H1 (cell line): ENCODE measurements at regions of chr5 and their contacts with region 1.

Region 1: GRCh38 chr5:57137401-57137800 is 36.5 kb upstream of the GPBP1 start:
- DNase-seq: no peak
- H3K4me3 ChIP-seq: no peak overlapping the region
- H3K27ac ChIP-seq: no peak overlapping the region
- H3K4me1 ChIP-seq: no peaks in the 10 kb centered on the region
- H3K27me3 ChIP-seq: no peaks in the 10 kb centered on the region
- CTCF ChIP-seq: no peak
- EP300 ChIP-seq: no peak
- POLR2A ChIP-seq: no peak
- RAD21 ChIP-seq: no peak

Region 2: GRCh38 chr5:56725711-56726411 is 411.5 kb before region 1 on chr5:
- CTCF ChIA-PET with region 1: no interaction called
- POLR2A ChIA-PET with region 1: no interaction called
- DNase-seq: no peak
- H3K4me3 ChIP-seq: no peak overlapping the region
- H3K27ac ChIP-seq: no peak overlapping the region
- H3K4me1 ChIP-seq: no peaks in the 10 kb centered on the region
- H3K27me3 ChIP-seq: peaks cover 0 to 1% (median 0%) of the 10 kb centered on the region in 4 experiments; a peak in 1 of 7 replicates
- CTCF ChIP-seq: no peak
- EP300 ChIP-seq: no peak
- POLR2A ChIP-seq: no peak
- RAD21 ChIP-seq: no peak

Region 3: GRCh38 chr5:56900858-56901578 is 236.4 kb before region 1 on chr5:
- CTCF ChIA-PET with region 1: interaction called, 21 read pairs
- POLR2A ChIA-PET with region 1: no interaction called
- DNase-seq: peak in 1 of 2 experiments; percentile 52
- H3K4me3 ChIP-seq: no peak overlapping the region
- H3K27ac ChIP-seq: no peak overlapping the region
- H3K4me1 ChIP-seq: no peaks in the 10 kb centered on the region
- H3K27me3 ChIP-seq: no peaks in the 10 kb centered on the region
- CTCF ChIP-seq: peak in 2 of 3 experiments; percentile 65 to 67; a peak in 3 of 4 replicates
- EP300 ChIP-seq: no peak
- POLR2A ChIP-seq: no peak
- RAD21 ChIP-seq: peak; percentile 86

Region 4: GRCh38 chr5:56950626-56951125 is 186.7 kb before region 1 on chr5:
- CTCF ChIA-PET with region 1: interaction called, 17 read pairs
- POLR2A ChIA-PET with region 1: interaction called, 10 read pairs
- DNase-seq: peak in 1 of 2 experiments; percentile 72
- H3K4me3 ChIP-seq: peak overlapping the region; percentile 59 to 89 (median 82)
- H3K27ac ChIP-seq: no peak overlapping the region
- H3K4me1 ChIP-seq: peaks cover 0 to 5% (median 2%) of the 10 kb centered on the region in 4 experiments; a peak in 3 of 7 replicates
- H3K27me3 ChIP-seq: peaks cover 0 to 7% (median 2%) of the 10 kb centered on the region in 4 experiments; a peak in 3 of 7 replicates
- CTCF ChIP-seq: no peak
- EP300 ChIP-seq: no peak
- POLR2A ChIP-seq: peak in 1 of 2 experiments; percentile 59; a peak in 2 of 3 replicates
- RAD21 ChIP-seq: 0 out of 4 replicates have a peak, but pooled peaks of 1 of the 2 experiments have one; percentile 0

Region 5: DNA sequence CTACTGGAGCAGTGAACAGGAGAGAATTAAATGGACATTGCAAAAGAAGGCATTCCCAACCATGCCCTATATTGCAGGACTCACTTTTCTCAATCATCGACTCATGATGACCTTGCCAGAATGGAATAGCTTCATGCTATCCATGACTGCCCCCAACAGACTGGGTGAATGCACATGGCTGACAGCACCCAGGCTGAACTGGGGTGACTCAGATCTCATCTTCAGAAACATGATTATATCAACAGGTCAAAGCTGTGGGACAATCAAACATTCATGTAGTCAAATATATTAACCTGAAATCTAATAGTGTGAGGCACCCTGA is 150.8 kb before region 1 on chr5:
- CTCF ChIA-PET with region 1: no interaction called
- POLR2A ChIA-PET with region 1: no interaction called
- DNase-seq: no peak
- H3K4me3 ChIP-seq: no peak overlapping the region
- H3K27ac ChIP-seq: no peak overlapping the region
- H3K4me1 ChIP-seq: no peaks in the 10 kb centered on the region
- H3K27me3 ChIP-seq: no peaks in the 10 kb centered on the region
- CTCF ChIP-seq: no peak
- EP300 ChIP-seq: no peak
- POLR2A ChIP-seq: no peak
- RAD21 ChIP-seq: no peak

Region 6: DNA sequence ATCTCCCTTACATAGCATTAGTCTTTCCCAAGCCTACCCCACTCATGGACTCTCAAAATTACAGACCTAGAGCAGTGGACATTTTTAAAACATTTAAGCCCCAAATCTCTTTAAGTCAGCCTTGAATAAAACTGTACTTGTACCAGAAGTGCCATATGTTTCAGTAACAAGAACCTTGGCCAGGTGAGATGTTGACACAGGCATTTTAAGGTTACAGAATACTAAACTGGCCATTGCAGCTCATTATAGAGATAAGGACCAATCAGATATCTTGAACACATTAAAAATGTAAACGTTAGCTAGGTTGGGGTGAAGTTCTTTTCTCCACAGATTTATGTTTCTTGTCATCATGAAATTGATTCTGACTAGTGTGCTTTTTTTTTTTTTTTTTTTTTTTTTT is 81.7 kb before region 1 on chr5:
- CTCF ChIA-PET with region 1: no interaction called
- POLR2A ChIA-PET with region 1: no interaction called
- DNase-seq: no peak
- H3K4me3 ChIP-seq: no peak overlapping the region
- H3K27ac ChIP-seq: no peak overlapping the region
- H3K4me1 ChIP-seq: no peaks in the 10 kb centered on the region
- H3K27me3 ChIP-seq: no peaks in the 10 kb centered on the region
- CTCF ChIP-seq: no peak
- EP300 ChIP-seq: no peak
- POLR2A ChIP-seq: no peak
- RAD21 ChIP-seq: no peak